ENCODE measurements at regions of chr17 and their contacts with region 1.

Region 1: GRCh38 chr17:37710344-37710886 is 34.4 kb downstream of the HNF1B start:
- DNase-seq: no peak
- ATAC-seq: no peak

Region 2: DNA sequence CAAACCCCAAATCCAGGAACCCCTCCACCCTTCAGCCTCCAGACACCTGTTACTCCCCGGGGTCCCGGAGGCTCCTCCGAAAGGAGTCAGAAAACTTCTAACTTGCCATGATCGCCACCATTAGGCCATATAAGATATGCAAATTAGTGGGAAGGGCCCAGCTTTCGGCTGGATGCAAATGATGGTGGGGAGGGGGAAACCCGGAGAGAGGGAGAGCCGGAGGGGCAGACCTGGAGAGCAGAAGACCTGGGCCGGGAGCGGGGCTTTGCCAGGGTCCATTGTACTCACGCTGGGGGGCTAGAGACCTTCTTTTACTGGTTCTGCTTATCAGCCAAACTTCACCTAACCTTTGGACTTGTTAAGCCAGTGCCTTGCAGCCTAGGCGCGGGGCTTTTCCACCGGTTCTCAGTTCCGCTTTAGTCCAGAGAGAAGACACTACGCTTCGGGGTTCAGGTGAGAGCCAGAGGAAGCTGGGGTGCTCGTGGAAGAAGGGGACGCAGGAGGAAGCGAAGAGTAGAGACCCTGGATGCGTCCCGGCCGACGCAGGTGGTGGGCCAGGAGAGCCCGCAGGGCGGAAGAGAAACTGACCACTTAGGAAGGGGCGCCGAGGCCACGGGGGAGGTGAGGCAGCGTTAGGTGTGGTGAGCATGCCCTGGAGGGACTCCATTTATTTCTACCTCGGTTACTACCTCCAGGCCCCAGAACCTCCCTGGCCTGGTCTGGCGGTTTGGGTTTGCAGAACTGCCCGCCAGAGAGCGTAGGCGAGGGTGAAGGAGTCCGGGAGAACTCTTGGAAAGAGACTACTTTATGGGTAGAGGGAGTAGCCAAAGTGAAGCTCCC is 34.8 kb after region 1 on chr17 and contains the start of gene HNF1B:
- intact Hi-C with region 1: no loop called
- DNase-seq: no peak
- ATAC-seq: no peak
- total RNA-seq, gene HNF1B: not detected

Region 3: DNA sequence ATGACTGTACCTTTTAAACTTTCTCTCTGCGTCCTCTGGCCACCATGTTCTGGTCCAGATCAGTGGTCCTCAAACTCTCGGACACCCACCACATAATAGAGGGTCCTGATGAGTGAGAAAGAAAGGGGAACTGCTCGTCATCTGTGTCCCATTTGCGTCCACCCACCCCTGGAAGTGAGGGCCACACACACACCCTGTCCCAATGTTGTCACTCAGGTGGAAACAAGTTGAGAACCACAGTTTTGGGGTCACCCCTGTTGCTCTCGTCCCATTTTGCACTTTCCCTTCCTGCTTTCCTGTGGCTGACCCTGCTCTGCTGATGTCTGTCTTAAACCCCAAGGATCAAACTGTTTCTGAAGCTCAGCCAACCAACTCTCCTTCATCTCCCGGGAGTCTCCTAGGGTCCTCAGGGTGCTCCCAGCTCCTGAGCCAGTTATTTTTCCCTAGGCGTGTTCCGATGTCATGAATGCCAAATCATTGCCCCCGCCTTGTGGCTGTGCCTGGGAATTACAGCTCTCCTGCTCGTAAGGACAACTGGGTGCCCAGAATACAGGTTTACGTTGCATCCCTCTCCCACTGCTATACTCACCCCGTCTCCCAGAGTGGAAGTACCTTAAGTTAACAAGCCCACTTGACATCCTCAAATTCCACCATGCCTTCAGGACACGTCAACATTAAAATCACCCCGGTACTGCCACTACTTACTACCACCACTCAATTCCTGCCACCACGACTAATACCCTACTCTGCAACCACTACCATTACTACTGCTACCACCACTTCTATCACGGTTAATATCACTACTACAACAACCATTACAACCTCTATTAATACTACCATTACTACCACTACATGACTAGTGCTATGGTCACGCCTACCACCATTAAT is 60.5 kb after region 1 on chr17:
- intact Hi-C with region 1: loop called (anchors 10 kb)
- DNase-seq: no peak
- ATAC-seq: no peak

Measured in Right ventricle myocardium inferior (tissue), 1 donor.